Activated T-helper 2 cell treated with anti-CD3 and anti-CD28 coated beads, Interferon-gamma antibody, Interleukin-2, Interleukin-4, amounts not matched to agents 10 μg/mL and 5 μg/mL and 100 μg/mL, durations not matched to agents 14 hours and 24 hours and 36 hours (primary cell): ENCODE measurements at regions of chr1 and their contacts with region 1.

Region 1: GRCh38 chr1:222009105-222009730 is 267.3 kb upstream of the DUSP10 start:
- DNase-seq: no peak
- H3K4me3 Mint-ChIP-seq: no peak overlapping the region
- H3K27ac Mint-ChIP-seq: no peak overlapping the region
- H3K4me1 Mint-ChIP-seq: peaks cover 6% of the 10 kb centered on the region
- H3K27me3 Mint-ChIP-seq: peaks cover 33% of the 10 kb centered on the region

Region 2: GRCh38 chr1:221478050-221478949 is 530.9 kb before region 1 on chr1:
- intact Hi-C with region 1: loop called (anchors 1 kb)
- DNase-seq: peak; percentile 11
- H3K4me3 Mint-ChIP-seq: no peak overlapping the region
- H3K27ac Mint-ChIP-seq: no peak overlapping the region
- H3K4me1 Mint-ChIP-seq: peaks cover 2% of the 10 kb centered on the region
- H3K27me3 Mint-ChIP-seq: peaks cover 18% of the 10 kb centered on the region

Region 3: GRCh38 chr1:221543529-221544120 is 465.6 kb before region 1 on chr1:
- intact Hi-C with region 1: loop called (anchors 10 kb)
- DNase-seq: no peak
- H3K4me3 Mint-ChIP-seq: no peak overlapping the region
- H3K27ac Mint-ChIP-seq: no peak overlapping the region
- H3K4me1 Mint-ChIP-seq: peaks cover 2% of the 10 kb centered on the region
- H3K27me3 Mint-ChIP-seq: peaks cover 18% of the 10 kb centered on the region

Region 4: GRCh38 chr1:222073307-222073995 is 64.2 kb after region 1 on chr1:
- intact Hi-C with region 1: no loop called
- DNase-seq: no peak
- H3K4me3 Mint-ChIP-seq: no peak overlapping the region
- H3K27ac Mint-ChIP-seq: no peak overlapping the region
- H3K4me1 Mint-ChIP-seq: no peaks in the 10 kb centered on the region
- H3K27me3 Mint-ChIP-seq: peaks cover 2% of the 10 kb centered on the region